ENCODE measurements at regions of chr2 and their contacts with region 1.

Region 1: DNA sequence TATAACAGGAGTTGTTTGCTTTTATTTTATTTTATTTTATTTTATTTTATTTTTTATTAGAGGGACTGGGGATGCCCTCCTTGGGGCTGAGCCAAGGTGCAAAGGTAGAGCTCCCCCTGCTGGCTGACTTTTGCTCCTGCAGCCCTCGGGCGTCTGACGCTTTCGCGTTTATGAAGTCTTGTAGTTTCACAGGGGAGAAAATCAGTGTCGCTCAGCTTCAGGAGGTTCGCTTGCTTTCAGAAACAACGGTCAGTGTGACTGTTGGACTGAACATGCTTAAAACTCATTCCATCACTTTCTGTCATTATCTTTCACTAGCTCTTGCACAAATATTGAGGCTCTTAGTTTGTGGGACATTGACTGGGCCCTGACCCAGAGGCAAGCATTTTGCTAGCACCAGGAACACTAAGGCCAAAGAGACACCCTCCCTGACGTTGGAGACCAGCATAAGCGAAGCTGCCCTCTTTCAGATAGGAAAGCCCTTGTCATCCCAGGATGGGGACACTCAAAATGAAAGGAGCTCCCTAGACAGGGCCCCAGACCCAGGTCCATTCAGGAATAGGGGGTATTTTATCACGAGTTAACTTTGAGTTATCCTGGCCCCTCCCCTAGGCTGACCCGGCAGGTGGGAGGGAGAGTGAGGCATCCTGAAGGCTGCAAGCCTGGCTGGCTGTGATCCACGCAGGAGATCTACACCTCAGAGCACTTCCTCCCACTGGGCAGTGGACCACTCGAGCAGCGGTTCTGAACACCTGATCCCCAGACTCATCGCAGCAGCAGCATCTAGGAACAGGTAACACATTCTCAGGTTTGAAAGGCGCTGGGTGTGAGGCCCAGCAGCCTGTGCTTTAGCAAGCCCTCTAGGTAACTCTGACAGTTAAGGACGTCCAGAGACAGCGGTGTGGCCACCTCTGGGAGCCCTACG is 34.4 kb downstream of the LGALSL start:
- DNase-seq: peak; percentile 61 to 72
- H3K4me3 ChIP-seq: no peak overlapping the region
- H3K27ac ChIP-seq: no peak overlapping the region
- H3K4me1 ChIP-seq: no peaks in the 10 kb centered on the region
- H3K27me3 ChIP-seq: no peaks in the 10 kb centered on the region
- CTCF ChIP-seq: peak; percentile 77 to 96 (median 86)
- POLR2A ChIP-seq: no peak

Region 2: DNA sequence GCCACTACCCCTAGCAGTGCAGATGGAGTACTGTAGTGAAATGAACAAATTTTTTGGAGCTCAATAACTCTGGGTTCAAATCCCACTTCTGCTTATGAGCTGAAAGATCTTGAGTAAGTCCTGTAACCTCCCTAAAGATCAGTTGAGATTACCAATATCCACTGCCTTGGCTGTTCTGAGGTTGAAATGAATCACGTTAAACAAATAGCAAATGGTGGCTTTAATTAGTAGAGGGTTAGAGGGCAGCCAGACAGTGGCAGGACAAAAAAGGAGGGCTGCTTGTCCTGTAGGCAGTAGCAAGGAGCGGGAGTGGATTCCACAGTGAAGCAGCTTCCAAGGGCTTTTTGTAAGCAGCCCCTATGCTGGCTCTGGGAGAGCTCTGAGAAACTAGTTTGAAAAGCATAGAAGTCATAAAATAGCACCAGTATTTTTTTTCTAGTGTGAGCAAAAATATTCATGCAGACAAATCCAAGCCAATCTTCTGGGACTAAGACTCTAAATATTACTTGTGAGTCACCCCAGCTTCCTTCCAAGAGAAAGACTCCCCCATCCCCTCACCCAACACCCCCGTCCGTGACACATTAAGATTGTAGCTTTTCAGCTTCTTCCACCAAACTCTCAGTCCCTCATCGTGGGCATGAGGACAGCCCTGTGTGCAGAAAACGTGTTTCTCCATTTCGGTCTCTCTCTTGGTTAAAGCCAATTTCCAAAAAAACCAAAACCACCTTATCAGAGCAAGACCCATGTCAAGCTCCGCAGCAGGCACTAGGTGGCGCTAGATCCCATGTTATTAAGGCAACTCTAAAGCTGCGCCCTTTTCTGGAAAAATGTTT is 157.8 kb before region 1 on chr2:
- intact Hi-C with region 1: loop called (anchors 5 kb)
- DNase-seq: peak; percentile 84 to 89
- H3K4me3 ChIP-seq: no peak overlapping the region
- H3K27ac ChIP-seq: peak overlapping the region; percentile 76 to 91
- H3K4me1 ChIP-seq: peaks cover 0 to 6% of the 10 kb centered on the region in 2 donors
- H3K27me3 ChIP-seq: no peaks in the 10 kb centered on the region
- CTCF ChIP-seq: peak; percentile 91 to 94 (median 93)
- POLR2A ChIP-seq: no peak

Region 3: GRCh38 chr2:64422466-64422865 is 65.8 kb before region 1 on chr2:
- intact Hi-C with region 1: no loop called
- DNase-seq: no peak
- H3K4me3 ChIP-seq: no peak overlapping the region
- H3K27ac ChIP-seq: no peak overlapping the region
- H3K4me1 ChIP-seq: no peaks in the 10 kb centered on the region
- H3K27me3 ChIP-seq: no peaks in the 10 kb centered on the region
- CTCF ChIP-seq: no peak
- POLR2A ChIP-seq: no peak

Region 4: GRCh38 chr2:64753377-64753776 is 265.1 kb after region 1 on chr2:
- intact Hi-C with region 1: no loop called
- DNase-seq: no peak
- H3K4me3 ChIP-seq: no peak overlapping the region
- H3K27ac ChIP-seq: no peak overlapping the region
- H3K4me1 ChIP-seq: no peaks in the 10 kb centered on the region
- H3K27me3 ChIP-seq: no peaks in the 10 kb centered on the region
- CTCF ChIP-seq: no peak
- POLR2A ChIP-seq: no peak

Region 5: GRCh38 chr2:64945973-64946768 is 457.9 kb after region 1 on chr2:
- intact Hi-C with region 1: no loop called
- DNase-seq: peak in 1 of 2 donors; percentile 23
- H3K4me3 ChIP-seq: no peak overlapping the region
- H3K27ac ChIP-seq: peak overlapping the region; percentile 27 to 40
- H3K4me1 ChIP-seq: no peaks in the 10 kb centered on the region
- H3K27me3 ChIP-seq: no peaks in the 10 kb centered on the region
- CTCF ChIP-seq: no peak
- POLR2A ChIP-seq: no peak